Ovary (tissue), 10 donors: ENCODE measurements at regions of chr9 and their contacts with region 1.

Region 1: DNA sequence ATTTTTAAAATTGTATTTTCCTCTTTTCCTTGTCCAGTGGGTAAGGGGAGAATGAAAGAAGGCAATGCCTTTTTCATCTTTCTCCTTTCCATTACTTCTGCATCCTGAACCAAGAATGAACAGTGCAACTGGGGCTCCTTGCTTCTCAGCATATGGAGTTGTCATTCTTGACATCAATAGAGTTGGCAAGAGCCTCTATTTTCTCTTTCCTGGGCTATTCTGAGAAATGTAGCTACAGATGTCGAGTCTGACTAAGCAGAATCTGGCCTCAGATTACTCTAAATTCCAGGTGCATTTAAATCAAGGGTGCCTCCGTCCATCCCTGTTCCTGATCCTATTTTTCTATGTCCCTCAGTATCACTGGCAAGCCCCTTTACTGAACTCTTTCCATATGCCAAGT is 244.8 kb downstream of the GLIS3 start:
- DNase-seq: no peak
- H3K4me3 ChIP-seq: no peak overlapping the region
- H3K27ac ChIP-seq: no peak overlapping the region
- H3K4me1 ChIP-seq: peaks cover 12% of the 10 kb centered on the region
- H3K27me3 ChIP-seq: no peaks in the 10 kb centered on the region
- CTCF ChIP-seq: no peak
- EP300 ChIP-seq: no peak
- POLR2A ChIP-seq: no peak

Region 2: GRCh38 chr9:3962971-3963642 is 91.9 kb before region 1 on chr9:
- intact Hi-C with region 1: loop called in 1 of 4 experiments (anchors 10 kb)
- DNase-seq: peak; percentile 44 to 75 (median 68)
- H3K4me3 ChIP-seq: no peak overlapping the region
- H3K27ac ChIP-seq: no peak overlapping the region
- H3K4me1 ChIP-seq: peaks cover 8% of the 10 kb centered on the region
- H3K27me3 ChIP-seq: no peaks in the 10 kb centered on the region
- CTCF ChIP-seq: no peak
- EP300 ChIP-seq: no peak
- POLR2A ChIP-seq: no peak